Activated CD4-positive, alpha-beta memory T cell treated with anti-CD3 and anti-CD28 coated beads, Interleukin-2, amount 10 ng/mL, durations not matched to agents 7 days and 5 days (primary cell): ENCODE measurements at regions of chr14 and their contacts with region 1.

Region 1: GRCh38 chr14:97978341-97978740 is 1181.2 kb downstream of the VRK1 start:
- DNase-seq: peak; percentile 81
- H3K4me3 Mint-ChIP-seq: peak overlapping the region; percentile 86
- H3K27ac Mint-ChIP-seq: peak overlapping the region; percentile 90
- H3K4me1 Mint-ChIP-seq: peaks cover 50% of the 10 kb centered on the region
- H3K27me3 Mint-ChIP-seq: no peaks in the 10 kb centered on the region

Region 2: GRCh38 chr14:97602438-97603117 is 375.8 kb before region 1 on chr14:
- CTCF ChIA-PET with region 1: interaction called, 7 read pairs
- POLR2A ChIA-PET with region 1: interaction called, 14 read pairs
- DNase-seq: peak; percentile 82
- H3K4me3 Mint-ChIP-seq: no peak overlapping the region
- H3K27ac Mint-ChIP-seq: no peak overlapping the region
- H3K4me1 Mint-ChIP-seq: peaks cover 30% of the 10 kb centered on the region
- H3K27me3 Mint-ChIP-seq: no peaks in the 10 kb centered on the region

Region 3: GRCh38 chr14:97707603-97708002 is 270.7 kb before region 1 on chr14:
- CTCF ChIA-PET with region 1: interaction called, 3 read pairs
- POLR2A ChIA-PET with region 1: interaction called, 12 read pairs
- DNase-seq: peak; percentile 65
- H3K4me3 Mint-ChIP-seq: peak overlapping the region; percentile 26
- H3K27ac Mint-ChIP-seq: peak overlapping the region; percentile 96
- H3K4me1 Mint-ChIP-seq: peaks cover 90% of the 10 kb centered on the region
- H3K27me3 Mint-ChIP-seq: no peaks in the 10 kb centered on the region

Region 4: GRCh38 chr14:98173305-98173704 is 195.0 kb after region 1 on chr14:
- CTCF ChIA-PET with region 1: interaction called, 5 read pairs
- POLR2A ChIA-PET with region 1: interaction called, 10 read pairs
- DNase-seq: peak; percentile 62
- H3K4me3 Mint-ChIP-seq: peak overlapping the region; percentile 40
- H3K27ac Mint-ChIP-seq: peak overlapping the region; percentile 86
- H3K4me1 Mint-ChIP-seq: peaks cover 92% of the 10 kb centered on the region
- H3K27me3 Mint-ChIP-seq: no peaks in the 10 kb centered on the region

Region 5: DNA sequence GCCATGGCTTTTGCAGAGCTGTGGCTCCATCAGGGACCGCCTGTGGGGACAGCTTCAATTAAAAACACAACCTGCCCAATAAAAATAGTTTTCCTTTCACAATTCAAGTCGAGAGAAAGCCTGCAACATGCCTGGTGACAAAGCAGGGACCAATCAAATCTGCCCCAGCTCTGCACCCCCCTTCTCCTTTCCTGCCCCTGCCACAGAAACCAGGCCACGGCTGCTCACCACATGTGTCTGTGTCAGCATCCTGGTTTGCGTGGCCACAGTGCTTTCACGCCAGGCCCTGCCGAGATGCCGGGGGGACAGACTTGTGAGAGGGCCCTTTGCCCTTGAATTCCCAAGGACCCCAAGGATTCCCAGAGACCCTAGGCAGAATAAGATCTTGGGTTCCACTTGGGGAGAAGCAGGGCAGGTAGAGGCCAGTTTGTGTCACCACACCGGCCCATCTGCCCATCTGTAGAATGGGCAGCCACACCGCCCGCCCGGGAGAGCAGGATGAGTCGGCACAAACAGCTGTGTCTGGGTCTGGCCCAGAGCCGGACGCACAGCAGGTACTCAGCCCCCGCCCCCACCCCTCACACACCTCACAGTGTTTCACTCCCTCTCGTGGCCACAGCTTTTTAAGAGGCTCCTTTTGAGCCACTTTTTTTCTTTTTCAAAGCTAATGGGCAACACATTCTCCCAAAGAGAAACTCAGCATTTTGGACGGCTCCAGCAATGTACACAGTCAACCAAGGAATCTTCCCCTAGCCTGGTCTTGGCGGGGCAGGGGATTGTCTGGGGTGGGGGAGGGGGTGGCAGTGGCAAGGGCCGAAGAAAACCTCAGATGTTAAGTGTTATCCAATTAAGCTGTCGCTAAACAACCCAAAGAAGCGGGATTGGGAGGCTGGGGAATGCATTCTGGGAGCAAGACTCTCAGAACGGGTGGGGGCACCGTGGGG is 1252.1 kb after region 1 on chr14:
- CTCF ChIA-PET with region 1: interaction called, 13 read pairs
- POLR2A ChIA-PET with region 1: interaction called, 6 read pairs
- DNase-seq: peak; percentile 93
- H3K4me3 Mint-ChIP-seq: peak overlapping the region; percentile 73
- H3K27ac Mint-ChIP-seq: peak overlapping the region; percentile 99
- H3K4me1 Mint-ChIP-seq: peaks cover 94% of the 10 kb centered on the region
- H3K27me3 Mint-ChIP-seq: no peaks in the 10 kb centered on the region

Region 6: DNA sequence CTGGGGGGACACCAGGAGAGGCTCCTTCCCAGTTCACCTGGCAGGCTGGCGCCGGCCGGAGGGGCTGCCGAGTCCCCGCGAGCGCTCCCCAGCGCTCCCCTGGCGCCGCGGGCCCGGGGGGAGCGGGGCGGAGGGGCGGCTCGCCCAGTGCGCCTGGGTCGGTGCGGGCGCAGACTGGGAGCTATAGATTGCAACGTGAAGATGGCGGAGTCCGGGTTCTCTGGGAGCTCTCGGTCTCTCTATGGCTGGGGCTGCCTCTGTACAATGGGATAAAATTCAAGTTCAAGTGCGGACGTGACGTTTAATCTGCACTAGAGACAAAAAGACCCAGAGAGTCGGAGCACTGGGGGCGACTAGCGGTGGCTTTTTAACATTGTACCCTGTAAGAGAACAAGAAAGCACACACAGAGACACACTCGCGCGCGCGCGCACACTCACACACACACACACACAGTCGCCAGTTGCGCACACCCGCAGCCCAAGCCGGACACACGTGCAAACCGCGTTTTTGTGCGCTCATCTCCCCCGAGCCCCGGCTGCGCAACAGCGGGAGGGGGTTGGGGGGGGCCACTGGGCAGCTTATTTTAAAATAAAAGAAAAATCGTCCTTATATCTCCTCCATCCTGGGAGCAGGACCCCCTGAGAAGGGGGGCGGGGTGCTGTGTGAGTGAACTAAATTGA is 1293.8 kb after region 1 on chr14 and contains the start of gene BCL11B:
- CTCF ChIA-PET with region 1: interaction called, 45 read pairs
- POLR2A ChIA-PET with region 1: interaction called, 74 read pairs
- DNase-seq: peak; percentile 93
- H3K4me3 Mint-ChIP-seq: peak within 1 kb of the TSS; percentile 89
- H3K27ac Mint-ChIP-seq: peak within 1 kb of the TSS; percentile 95
- H3K4me1 Mint-ChIP-seq: peaks cover 30% of the 10 kb centered on the region
- H3K27me3 Mint-ChIP-seq: peaks cover 20% of the 10 kb centered on the region
- total RNA-seq, gene BCL11B: 81.7 to 82.0 TPM